ENCODE measurements at regions of chr1 and their contacts with region 1.

Region 1: DNA sequence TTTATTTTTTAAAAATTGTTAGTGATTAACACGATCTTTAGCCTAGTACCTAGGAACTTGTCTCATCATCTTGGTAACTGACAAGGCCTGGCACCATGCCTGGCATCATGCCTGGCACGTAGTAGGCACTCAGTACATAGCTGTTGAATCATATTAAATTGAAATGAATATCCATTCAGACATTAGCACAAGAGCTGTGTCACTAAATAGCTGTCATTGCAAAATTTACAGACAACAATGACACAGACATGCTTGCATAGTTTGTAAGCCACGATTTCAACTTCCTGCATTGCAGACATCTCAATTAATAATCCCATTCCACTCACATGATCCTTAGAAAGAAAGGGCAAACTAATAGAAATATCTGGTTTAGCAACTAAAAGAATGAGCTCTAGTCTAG is 15.4 kb upstream of the PHACTR4 start:
- DNase-seq: no peak
- CTCF ChIP-seq: no peak

Region 2: GRCh38 chr1:28369371-28370238 is 15.5 kb after region 1 on chr1 and contains the start of gene PHACTR4:
- CTCF ChIA-PET with region 1: interaction called, 28 read pairs
- POLR2A ChIA-PET with region 1: no interaction called
- DNase-seq: peak; percentile 94
- CTCF ChIP-seq: no peak

Region 3: DNA sequence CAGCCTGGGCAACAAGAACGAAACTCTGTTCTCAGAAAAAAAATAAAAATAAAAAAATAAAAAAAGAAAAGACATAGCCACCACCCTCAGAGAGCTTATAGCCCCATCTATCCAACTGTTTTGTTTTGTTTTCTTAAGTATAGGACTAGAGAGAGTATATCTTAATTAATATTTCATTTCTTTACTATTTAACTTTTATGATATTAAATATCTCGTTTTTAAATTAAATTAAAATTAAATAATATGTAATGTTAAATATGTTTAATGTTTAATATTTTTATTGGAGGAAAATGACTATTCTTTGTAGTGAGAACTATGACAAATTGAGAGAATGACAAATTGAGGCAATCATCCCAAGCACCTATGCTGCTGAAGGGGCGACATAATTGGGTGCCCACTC is 349.5 kb after region 1 on chr1:
- CTCF ChIA-PET with region 1: no interaction called
- POLR2A ChIA-PET with region 1: no interaction called
- DNase-seq: no peak
- CTCF ChIP-seq: no peak